HepG2 (cell line): ENCODE measurements at regions of chr22 and their contacts with region 1.

Region 1: DNA sequence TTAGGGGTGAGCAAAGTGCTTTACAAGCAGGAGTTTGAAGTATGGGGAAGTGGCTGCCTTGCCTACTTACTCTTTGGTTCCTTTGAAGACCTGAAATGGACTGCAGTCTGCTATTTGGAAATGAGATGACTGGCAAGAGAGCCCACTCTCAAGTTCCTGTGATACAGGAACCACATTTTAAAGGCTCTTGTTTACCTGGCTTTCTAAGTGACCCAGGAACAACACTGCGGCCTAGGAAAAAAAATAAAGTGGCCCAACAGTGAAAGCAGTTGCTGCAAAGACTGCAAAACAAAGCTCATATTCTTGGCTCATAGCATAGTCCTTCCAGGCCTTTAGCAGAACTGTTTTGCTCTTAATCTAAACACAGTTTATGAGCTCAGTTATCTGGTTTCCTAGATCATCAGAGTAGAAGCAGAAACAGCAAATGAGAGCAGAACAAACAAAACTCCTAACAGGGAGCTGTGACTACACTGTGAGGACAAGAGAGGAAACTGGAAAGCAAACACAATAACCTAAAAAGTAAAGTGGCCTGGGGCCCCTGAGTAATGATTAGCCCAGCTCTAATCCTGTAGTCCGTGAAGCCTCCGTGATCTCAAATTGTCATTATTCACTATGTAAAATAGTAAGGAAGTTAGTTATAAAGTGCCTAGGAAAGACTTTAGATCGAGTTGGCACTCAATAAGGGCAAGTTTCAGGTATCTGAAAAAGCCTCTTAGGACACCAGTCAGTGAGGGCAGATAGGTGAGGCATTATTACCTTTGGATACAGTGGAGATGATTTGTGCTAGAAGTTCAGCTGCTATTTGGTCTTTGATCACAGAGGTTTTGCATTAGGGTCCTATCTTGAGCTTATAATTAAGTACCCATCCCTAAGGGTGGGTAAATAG is 11.5 kb downstream of the CCDC117 start:
- DNase-seq: peak; percentile 96
- ATAC-seq: peak; percentile 98
- H3K4me3 ChIP-seq: peak overlapping the region in 2 of 3 experiments; percentile 17 to 35; a peak in 2 of 6 replicates
- H3K27ac ChIP-seq: peak overlapping the region; percentile 84
- H3K4me1 ChIP-seq: peaks cover 61% of the 10 kb centered on the region
- H3K27me3 ChIP-seq: no peaks in the 10 kb centered on the region
- CTCF ChIP-seq: no peak
- EP300 ChIP-seq: peak in 1 of 2 experiments; percentile 80; a peak in 2 of 4 replicates
- POLR2A ChIP-seq: no peak; a peak in 1 of 4 replicates
- RAD21 ChIP-seq: no peak

Region 2: GRCh38 chr22:28600546-28601143 is 183.4 kb before region 1 on chr22:
- CTCF ChIA-PET with region 1: no interaction called
- POLR2A ChIA-PET with region 1: no interaction called
- in situ Hi-C with region 1: loop called (anchors 10 kb)
- intact Hi-C with region 1: loop called (anchors 5 kb)
- DNase-seq: peak; percentile 53
- ATAC-seq: no peak
- H3K4me3 ChIP-seq: no peak overlapping the region
- H3K27ac ChIP-seq: no peak overlapping the region
- H3K4me1 ChIP-seq: peaks cover 13% of the 10 kb centered on the region
- H3K27me3 ChIP-seq: no peaks in the 10 kb centered on the region
- CTCF ChIP-seq: peak; percentile 68
- EP300 ChIP-seq: no peak
- POLR2A ChIP-seq: no peak
- RAD21 ChIP-seq: 0 out of 2 replicates have a peak, but pooled peaks have one; percentile 10

Region 3: GRCh38 chr22:28772633-28773460 is 11.2 kb before region 1 on chr22 and contains the start of gene CCDC117:
- CTCF ChIA-PET with region 1: no interaction called
- POLR2A ChIA-PET with region 1: interaction called, 59 read pairs
- in situ Hi-C with region 1: no loop called
- intact Hi-C with region 1: no loop called
- DNase-seq: peak; percentile 90
- ATAC-seq: peak; percentile 92
- H3K4me3 ChIP-seq: peak within 1 kb of the TSS; percentile 71 to 87 (median 82)
- H3K27ac ChIP-seq: peak within 1 kb of the TSS; percentile 91
- H3K4me1 ChIP-seq: peaks cover 82% of the 10 kb centered on the region
- H3K27me3 ChIP-seq: no peaks in the 10 kb centered on the region; a peak in 1 of 5 replicates
- CTCF ChIP-seq: 0 out of 2 replicates have a peak, but pooled peaks have one; percentile 12
- EP300 ChIP-seq: peak in 1 of 2 experiments; percentile 72; a peak in 1 of 4 replicates
- POLR2A ChIP-seq: peak; percentile 72 to 80
- RAD21 ChIP-seq: peak; percentile 66; the same call in 1 of the 2 replicates
- total RNA-seq, gene CCDC117: 34.2 and 43.8 TPM in 2 replicates

Region 4: GRCh38 chr22:28810821-28811491 is 26.9 kb after region 1 on chr22:
- CTCF ChIA-PET with region 1: no interaction called
- POLR2A ChIA-PET with region 1: interaction called, 945 read pairs
- in situ Hi-C with region 1: no loop called
- intact Hi-C with region 1: no loop called
- DNase-seq: peak; percentile 96
- ATAC-seq: peak; percentile 45
- H3K4me3 ChIP-seq: peak overlapping the region; percentile 38 to 51 (median 41); a peak in 4 of 6 replicates
- H3K27ac ChIP-seq: peak overlapping the region; percentile 98
- H3K4me1 ChIP-seq: peaks cover 94% of the 10 kb centered on the region
- H3K27me3 ChIP-seq: no peaks in the 10 kb centered on the region
- CTCF ChIP-seq: no peak
- EP300 ChIP-seq: peak; percentile 62 to 90; a peak in 2 of 4 replicates
- POLR2A ChIP-seq: no peak
- RAD21 ChIP-seq: no peak

Region 5: GRCh38 chr22:28829358-28830181 is 45.5 kb after region 1 on chr22:
- CTCF ChIA-PET with region 1: no interaction called
- POLR2A ChIA-PET with region 1: interaction called, 945 read pairs
- in situ Hi-C with region 1: no loop called
- intact Hi-C with region 1: no loop called
- DNase-seq: peak; percentile 92
- ATAC-seq: peak; percentile 89
- H3K4me3 ChIP-seq: peak overlapping the region in 2 of 3 experiments; percentile 22 to 34; a peak in 3 of 6 replicates
- H3K27ac ChIP-seq: peak overlapping the region; percentile 69
- H3K4me1 ChIP-seq: peaks cover 41% of the 10 kb centered on the region
- H3K27me3 ChIP-seq: no peaks in the 10 kb centered on the region
- CTCF ChIP-seq: peak; percentile 95
- EP300 ChIP-seq: peak; percentile 35 to 57; a peak in 3 of 4 replicates
- POLR2A ChIP-seq: peak in 1 of 2 experiments; percentile 19; a peak in 1 of 4 replicates
- RAD21 ChIP-seq: peak; percentile 98